MCF 10A (cell line): ENCODE measurements at regions of chr1 and their contacts with region 1.

Region 1: GRCh38 chr1:178126790-178127189 is 32.9 kb downstream of the RASAL2 start:
- DNase-seq: peak; percentile 87
- H3K4me3 Mint-ChIP-seq: peak overlapping the region; percentile 60
- H3K27ac Mint-ChIP-seq: peak overlapping the region; percentile 96
- H3K4me1 Mint-ChIP-seq: peaks cover 42% of the 10 kb centered on the region
- H3K27me3 Mint-ChIP-seq: no peaks in the 10 kb centered on the region
- CTCF ChIP-seq: no peak

Region 2: DNA sequence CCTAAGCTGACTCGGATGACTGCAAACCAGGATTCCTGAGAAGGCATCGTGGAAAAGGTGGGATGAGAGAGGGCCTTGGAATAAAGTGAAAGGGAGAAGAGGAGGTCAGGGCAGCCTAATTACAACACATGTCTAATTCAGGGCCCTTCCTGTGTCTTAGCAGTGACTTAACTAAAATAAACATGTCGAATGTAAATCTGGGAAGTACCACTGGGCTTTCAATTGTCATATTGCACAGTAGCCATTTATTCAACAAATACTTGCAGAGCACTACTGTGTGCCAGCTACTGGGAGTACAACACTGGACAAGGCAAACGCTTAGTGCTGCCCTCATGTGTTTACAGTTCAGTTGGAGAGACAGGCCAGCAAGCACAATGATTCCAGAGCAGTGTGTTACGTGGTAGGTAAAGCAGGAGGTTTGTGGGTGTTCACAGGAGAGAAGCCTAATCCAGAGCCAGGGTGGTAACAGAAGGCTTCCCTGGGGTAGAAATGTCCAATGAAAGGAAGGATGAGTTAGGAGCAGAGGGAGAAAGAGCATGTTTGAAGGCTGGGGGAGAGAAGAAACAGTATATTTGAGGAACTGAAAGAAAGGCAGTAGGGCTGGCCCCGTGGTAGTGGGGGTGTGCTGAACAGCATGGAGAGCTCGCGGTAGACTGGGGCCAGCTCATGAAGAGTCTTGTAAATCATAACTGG is 70.9 kb before region 1 on chr1:
- CTCF ChIA-PET with region 1: interaction called, 4 read pairs
- POLR2A ChIA-PET with region 1: interaction called, 4 read pairs
- intact Hi-C with region 1: loop called (anchors 5 kb)
- DNase-seq: peak; percentile 77
- H3K4me3 Mint-ChIP-seq: no peak overlapping the region
- H3K27ac Mint-ChIP-seq: peak overlapping the region; percentile 14
- H3K4me1 Mint-ChIP-seq: peaks cover 50% of the 10 kb centered on the region
- H3K27me3 Mint-ChIP-seq: no peaks in the 10 kb centered on the region
- CTCF ChIP-seq: no peak

Region 3: DNA sequence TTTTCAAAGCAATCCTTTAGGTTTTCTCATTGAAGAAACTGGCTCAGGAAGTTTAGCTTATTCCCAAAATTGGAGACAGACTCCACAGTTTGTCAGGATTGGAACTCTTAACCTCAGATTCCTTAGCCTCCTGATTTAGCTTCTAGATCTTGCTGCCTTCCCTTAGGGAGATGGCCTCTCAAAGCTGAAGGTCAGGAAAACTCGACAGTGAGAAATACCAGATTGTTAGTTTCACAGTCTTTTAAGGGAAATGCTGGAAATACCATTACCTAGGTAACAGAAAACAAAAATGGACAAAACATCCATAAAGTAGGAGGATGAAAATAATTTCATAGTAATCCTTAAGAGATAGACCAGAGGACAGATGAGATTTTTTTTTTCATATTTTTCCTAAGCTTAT is 25.1 kb before region 1 on chr1:
- CTCF ChIA-PET with region 1: interaction called, 7 read pairs
- POLR2A ChIA-PET with region 1: interaction called, 23 read pairs
- intact Hi-C with region 1: no loop called
- DNase-seq: no peak
- H3K4me3 Mint-ChIP-seq: no peak overlapping the region
- H3K27ac Mint-ChIP-seq: no peak overlapping the region
- H3K4me1 Mint-ChIP-seq: peaks cover 40% of the 10 kb centered on the region
- H3K27me3 Mint-ChIP-seq: no peaks in the 10 kb centered on the region
- CTCF ChIP-seq: no peak

Region 4: GRCh38 chr1:178109348-178110143 is 17.2 kb before region 1 on chr1:
- CTCF ChIA-PET with region 1: interaction called, 9 read pairs
- POLR2A ChIA-PET with region 1: interaction called, 26 read pairs
- intact Hi-C with region 1: no loop called
- DNase-seq: no peak
- H3K4me3 Mint-ChIP-seq: no peak overlapping the region
- H3K27ac Mint-ChIP-seq: peak overlapping the region; percentile 75
- H3K4me1 Mint-ChIP-seq: peaks cover 22% of the 10 kb centered on the region
- H3K27me3 Mint-ChIP-seq: no peaks in the 10 kb centered on the region
- CTCF ChIP-seq: no peak

Region 5: GRCh38 chr1:178238722-178239510 is 112.1 kb after region 1 on chr1:
- CTCF ChIA-PET with region 1: no interaction called
- POLR2A ChIA-PET with region 1: interaction called, 5 read pairs
- intact Hi-C with region 1: loop called (anchors 1 kb)
- DNase-seq: peak; percentile 100
- H3K4me3 Mint-ChIP-seq: peak overlapping the region; percentile 57
- H3K27ac Mint-ChIP-seq: peak overlapping the region; percentile 96
- H3K4me1 Mint-ChIP-seq: peaks cover 69% of the 10 kb centered on the region
- H3K27me3 Mint-ChIP-seq: no peaks in the 10 kb centered on the region
- CTCF ChIP-seq: no peak